ENCODE measurements at regions of chr11 and their contacts with region 1.

Region 1: DNA sequence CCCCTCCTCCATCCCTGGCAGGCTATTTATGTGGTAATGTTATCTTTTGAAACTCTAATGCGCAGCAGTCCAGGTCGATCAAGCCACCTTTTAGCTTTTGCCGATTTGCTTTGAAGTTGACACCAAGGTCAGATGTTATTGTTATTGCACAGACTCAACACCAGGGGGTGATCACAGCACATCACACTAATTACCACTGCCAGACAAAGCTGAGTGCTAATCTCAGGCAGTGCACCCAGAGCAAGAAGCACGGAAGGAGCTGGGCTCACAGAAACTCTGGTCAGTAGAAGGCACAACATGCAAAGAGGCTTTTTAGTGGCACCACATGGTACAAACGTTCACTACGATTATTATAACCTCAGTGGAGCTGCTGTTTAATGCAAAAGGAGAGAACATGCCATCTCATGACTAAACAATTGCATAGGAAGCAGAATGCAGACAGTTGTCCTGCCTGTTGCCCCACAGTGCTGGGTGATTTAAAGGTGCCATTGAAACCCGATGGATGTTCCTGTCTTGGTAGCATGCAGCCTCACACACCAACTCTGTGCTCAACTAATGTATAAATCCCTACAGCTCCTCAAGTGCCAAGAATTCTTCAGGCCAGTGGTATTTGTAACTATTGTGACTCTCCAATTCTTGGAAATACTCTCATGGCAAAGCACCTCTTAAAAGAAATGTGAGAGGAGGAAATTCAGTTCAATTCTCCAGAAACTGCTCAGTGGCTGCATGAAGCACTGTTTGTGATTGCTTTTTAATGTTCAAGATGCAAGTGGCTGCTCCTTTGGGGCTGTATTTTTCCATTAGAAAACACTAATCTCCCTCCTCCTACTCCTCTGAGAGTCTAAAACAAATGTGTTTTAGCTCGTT is 353.9 kb upstream of the DDI1 start:
- DNase-seq: peak; percentile 68
- H3K4me3 Mint-ChIP-seq: no peak overlapping the region
- H3K27ac Mint-ChIP-seq: no peak overlapping the region
- H3K4me1 Mint-ChIP-seq: peaks cover 14% of the 10 kb centered on the region
- H3K27me3 Mint-ChIP-seq: no peaks in the 10 kb centered on the region
- CTCF ChIP-seq: peak; percentile 66

Region 2: GRCh38 chr11:103700622-103701021 is 18.1 kb after region 1 on chr11:
- CTCF ChIA-PET with region 1: interaction called, 7 read pairs
- intact Hi-C with region 1: loop called (anchors 1 kb)
- DNase-seq: no peak
- H3K4me3 Mint-ChIP-seq: no peak overlapping the region
- H3K27ac Mint-ChIP-seq: no peak overlapping the region
- H3K4me1 Mint-ChIP-seq: peaks cover 33% of the 10 kb centered on the region
- H3K27me3 Mint-ChIP-seq: no peaks in the 10 kb centered on the region
- CTCF ChIP-seq: no peak

Region 3: DNA sequence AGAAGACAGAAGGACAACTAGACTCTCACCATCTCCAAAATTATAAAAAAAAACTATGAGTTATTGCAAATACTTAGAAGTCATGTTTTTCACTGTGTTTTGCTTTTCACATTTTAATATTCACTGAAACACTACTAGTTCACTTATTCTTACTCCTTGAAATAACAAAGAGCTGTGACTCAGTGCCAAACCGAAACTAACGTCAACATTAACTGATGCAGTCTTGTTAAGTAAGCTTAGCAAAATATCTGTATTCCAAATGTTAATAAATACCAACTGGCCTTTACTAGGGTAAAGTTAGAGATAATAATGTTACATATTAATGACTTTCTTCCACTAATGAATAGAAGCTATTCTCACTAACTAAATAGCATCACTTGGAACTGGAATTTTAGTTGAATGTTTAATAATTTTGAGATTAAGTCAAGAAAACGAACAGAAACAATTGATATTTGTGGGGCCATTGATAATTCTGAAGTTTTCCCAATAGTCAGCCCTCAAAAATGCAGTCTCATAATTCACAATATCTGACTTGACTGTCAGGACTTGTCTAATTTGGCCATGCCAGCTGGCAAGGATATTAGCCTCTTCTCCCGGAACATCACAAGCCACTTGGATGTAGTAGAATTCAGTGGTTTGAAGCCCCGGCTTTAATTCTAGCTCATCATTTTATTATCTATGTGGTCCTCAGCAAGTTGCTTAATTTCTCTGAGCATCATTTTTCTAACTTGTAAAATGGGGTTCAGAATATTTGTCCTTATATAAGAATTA is 123.8 kb after region 1 on chr11:
- CTCF ChIA-PET with region 1: interaction called, 5 read pairs
- intact Hi-C with region 1: loop called (anchors 5 kb)
- DNase-seq: peak; percentile 13
- H3K4me3 Mint-ChIP-seq: peak overlapping the region; percentile 26
- H3K27ac Mint-ChIP-seq: peak overlapping the region; percentile 25
- H3K4me1 Mint-ChIP-seq: peaks cover 33% of the 10 kb centered on the region
- H3K27me3 Mint-ChIP-seq: no peaks in the 10 kb centered on the region
- CTCF ChIP-seq: no peak

Region 4: DNA sequence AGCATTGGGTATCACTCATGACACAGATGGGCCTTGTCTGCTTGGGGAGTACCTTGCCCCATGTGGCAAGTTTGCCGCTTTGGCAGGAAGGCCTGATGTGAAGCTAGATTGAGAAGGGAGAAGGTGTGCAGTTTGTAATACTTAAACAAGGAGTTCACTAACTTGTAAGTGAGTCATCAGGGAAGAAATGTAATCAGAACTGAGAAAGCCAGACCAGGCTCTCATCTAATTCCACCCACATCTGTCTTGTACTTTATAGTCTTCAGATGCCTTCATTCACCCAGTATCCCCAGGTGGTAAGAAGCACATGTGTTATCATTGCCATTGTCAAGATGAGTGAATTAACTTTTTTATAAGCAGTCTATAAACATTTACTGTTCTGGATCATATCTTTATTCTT is 237.9 kb after region 1 on chr11:
- CTCF ChIA-PET with region 1: no interaction called
- intact Hi-C with region 1: loop called (anchors 2 kb)
- DNase-seq: no peak
- H3K4me3 Mint-ChIP-seq: no peak overlapping the region
- H3K27ac Mint-ChIP-seq: no peak overlapping the region
- H3K4me1 Mint-ChIP-seq: peaks cover 43% of the 10 kb centered on the region
- H3K27me3 Mint-ChIP-seq: no peaks in the 10 kb centered on the region
- CTCF ChIP-seq: no peak

Region 5: GRCh38 chr11:104151404-104152204 is 469.1 kb after region 1 on chr11:
- CTCF ChIA-PET with region 1: interaction called, 4 read pairs
- intact Hi-C with region 1: loop called (anchors 1 kb)
- DNase-seq: no peak
- H3K4me3 Mint-ChIP-seq: no peak overlapping the region
- H3K27ac Mint-ChIP-seq: no peak overlapping the region
- H3K4me1 Mint-ChIP-seq: no peaks in the 10 kb centered on the region
- H3K27me3 Mint-ChIP-seq: no peaks in the 10 kb centered on the region
- CTCF ChIP-seq: no peak

Region 6: GRCh38 chr11:104164028-104164520 is 481.5 kb after region 1 on chr11 and contains the start of gene PDGFD:
- CTCF ChIA-PET with region 1: interaction called, 17 read pairs
- intact Hi-C with region 1: no loop called
- DNase-seq: peak; percentile 79
- H3K4me3 Mint-ChIP-seq: peak within 1 kb of the TSS; percentile 81
- H3K27ac Mint-ChIP-seq: peak within 1 kb of the TSS; percentile 50
- H3K4me1 Mint-ChIP-seq: no peaks in the 10 kb centered on the region
- H3K27me3 Mint-ChIP-seq: no peaks in the 10 kb centered on the region
- CTCF ChIP-seq: peak; percentile 23
- total RNA-seq, gene PDGFD: 5.1 and 7.2 TPM in 2 replicates

Measured in Calu3 (cell line).